ENCODE measurements at regions of chr2 and their contacts with region 1.

Region 1: DNA sequence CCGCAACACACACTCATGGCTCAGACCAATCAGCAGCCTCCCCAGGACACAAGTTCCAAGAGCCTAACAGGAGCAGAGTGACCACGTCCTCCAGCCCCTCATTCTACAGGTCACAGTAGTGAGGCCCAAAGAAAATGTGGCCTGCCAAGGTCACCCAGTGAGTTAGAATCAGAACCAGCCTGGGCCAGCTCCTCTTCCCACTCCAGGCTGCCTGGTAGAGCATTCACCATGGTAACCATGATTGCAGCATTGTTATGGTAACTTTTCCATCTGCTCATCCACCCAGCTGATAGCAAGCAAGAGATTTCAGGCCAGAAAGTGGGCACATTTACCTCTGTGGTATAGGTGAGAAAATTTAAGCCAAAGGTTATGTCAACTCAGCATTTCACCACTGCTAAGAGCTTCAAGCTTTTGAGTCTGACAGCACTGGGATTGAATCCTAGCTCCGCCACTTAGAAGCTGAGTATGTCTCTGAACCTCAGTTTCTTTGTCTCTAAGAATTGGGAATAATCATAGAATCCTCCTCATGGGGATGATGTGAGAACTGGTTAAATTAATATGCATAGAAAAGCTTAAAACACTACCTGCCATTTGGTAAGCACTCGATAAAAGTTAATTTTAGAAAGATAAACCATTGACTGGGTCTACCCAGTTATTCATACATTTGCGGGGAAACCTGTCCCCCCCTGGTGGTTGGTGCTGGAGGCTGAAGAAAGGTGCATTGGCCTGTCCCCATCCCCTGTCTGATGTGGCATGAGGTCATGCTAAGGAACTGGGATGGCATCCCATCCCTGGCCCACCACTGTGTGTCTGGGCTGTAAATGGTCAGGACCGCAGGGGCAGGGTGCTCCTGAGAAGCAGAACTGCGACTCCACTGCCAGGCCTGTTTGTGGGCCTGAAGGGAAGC is 181.5 kb downstream of the KLHL29 start:
- DNase-seq: no peak
- ATAC-seq: no peak
- H3K4me3 ChIP-seq: no peak overlapping the region
- H3K27ac ChIP-seq: peak overlapping the region in 4 of 10 donors; percentile 28 to 67 (median 52)
- H3K4me1 ChIP-seq: peaks cover 5 to 35% (median 19%) of the 10 kb centered on the region in 9 donors
- H3K27me3 ChIP-seq: no peaks in the 10 kb centered on the region
- CTCF ChIP-seq: peak in 7 of 9 donors; percentile 20 to 44 (median 30)

Region 2: DNA sequence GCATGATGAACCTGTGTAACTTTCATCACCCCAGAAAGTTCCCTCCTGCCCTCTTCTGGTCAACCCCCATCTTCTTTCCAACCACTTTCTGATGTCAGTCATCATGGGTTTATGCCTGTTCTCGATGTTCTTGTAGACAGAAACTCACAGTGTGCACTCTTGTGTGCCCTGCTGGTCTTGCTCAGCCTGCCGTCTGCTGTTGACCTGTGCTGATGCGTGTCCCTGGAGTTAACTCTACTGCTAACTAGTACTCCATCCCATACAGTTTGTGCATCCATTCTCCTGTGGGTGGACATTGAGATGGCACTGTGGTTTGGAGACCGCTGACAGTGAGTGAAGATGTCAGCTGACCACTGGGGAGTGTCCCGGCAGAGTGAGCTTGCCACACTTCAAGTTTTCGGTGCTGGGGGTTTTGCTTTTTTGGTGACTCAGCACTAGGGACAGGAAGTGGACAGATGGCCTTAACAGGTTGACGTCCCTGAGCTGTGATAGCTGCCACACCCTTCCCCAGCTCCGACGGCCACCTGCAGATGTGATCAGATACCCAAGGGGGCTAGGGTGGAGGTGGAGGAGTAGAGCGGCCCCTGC is 166.7 kb before region 1 on chr2:
- intact Hi-C with region 1: loop called in 1 of 10 experiments (anchors 10 kb)
- DNase-seq: no peak
- ATAC-seq: no peak
- H3K4me3 ChIP-seq: no peak overlapping the region
- H3K27ac ChIP-seq: no peak overlapping the region
- H3K4me1 ChIP-seq: peaks cover 0 to 12% (median 10%) of the 10 kb centered on the region in 9 donors
- H3K27me3 ChIP-seq: peaks cover 0 to 23% (median 9%) of the 10 kb centered on the region in 7 donors
- CTCF ChIP-seq: no peak

Region 3: GRCh38 chr2:23651191-23652080 is 84.9 kb after region 1 on chr2:
- intact Hi-C with region 1: no loop called
- DNase-seq: no peak
- ATAC-seq: no peak
- H3K4me3 ChIP-seq: no peak overlapping the region
- H3K27ac ChIP-seq: no peak overlapping the region
- H3K4me1 ChIP-seq: peaks cover 0 to 7% (median 3%) of the 10 kb centered on the region in 9 donors
- H3K27me3 ChIP-seq: no peaks in the 10 kb centered on the region
- CTCF ChIP-seq: no peak